CD4-positive, alpha-beta memory T cell (primary cell): ENCODE measurements at regions of chr22 and their contacts with region 1.

Region 1: GRCh38 chr22:39514373-39514973 is 5.9 kb upstream of the ATF4 start:
- DNase-seq: peak in 3 of 5 donors; percentile 33 to 44 (median 36)
- H3K4me3 ChIP-seq: no peak overlapping the region
- H3K4me3 Mint-ChIP-seq: no peak overlapping the region
- H3K27ac ChIP-seq: no peak overlapping the region
- H3K27ac Mint-ChIP-seq: peak overlapping the region in 4 of 7 donors; percentile 4 to 79 (median 17)
- H3K4me1 ChIP-seq: peaks cover 14% of the 10 kb centered on the region
- H3K4me1 Mint-ChIP-seq: peaks cover 11 to 30% (median 17%) of the 10 kb centered on the region in 4 donors
- H3K27me3 ChIP-seq: no peaks in the 10 kb centered on the region
- H3K27me3 Mint-ChIP-seq: no peaks in the 10 kb centered on the region

Region 2: GRCh38 chr22:39277155-39277607 is 237.3 kb before region 1 on chr22:
- CTCF ChIA-PET with region 1: no interaction called
- POLR2A ChIA-PET with region 1: no interaction called
- intact Hi-C with region 1: no loop called
- DNase-seq: no peak
- H3K4me3 ChIP-seq: no peak overlapping the region
- H3K4me3 Mint-ChIP-seq: no peak overlapping the region
- H3K27ac ChIP-seq: no peak overlapping the region
- H3K27ac Mint-ChIP-seq: no peak overlapping the region
- H3K4me1 ChIP-seq: no peaks in the 10 kb centered on the region
- H3K4me1 Mint-ChIP-seq: peaks cover 0 to 2% (median 0%) of the 10 kb centered on the region in 4 donors
- H3K27me3 ChIP-seq: no peaks in the 10 kb centered on the region
- H3K27me3 Mint-ChIP-seq: peaks cover 3 to 8% of the 10 kb centered on the region in 2 donors

Region 3: DNA sequence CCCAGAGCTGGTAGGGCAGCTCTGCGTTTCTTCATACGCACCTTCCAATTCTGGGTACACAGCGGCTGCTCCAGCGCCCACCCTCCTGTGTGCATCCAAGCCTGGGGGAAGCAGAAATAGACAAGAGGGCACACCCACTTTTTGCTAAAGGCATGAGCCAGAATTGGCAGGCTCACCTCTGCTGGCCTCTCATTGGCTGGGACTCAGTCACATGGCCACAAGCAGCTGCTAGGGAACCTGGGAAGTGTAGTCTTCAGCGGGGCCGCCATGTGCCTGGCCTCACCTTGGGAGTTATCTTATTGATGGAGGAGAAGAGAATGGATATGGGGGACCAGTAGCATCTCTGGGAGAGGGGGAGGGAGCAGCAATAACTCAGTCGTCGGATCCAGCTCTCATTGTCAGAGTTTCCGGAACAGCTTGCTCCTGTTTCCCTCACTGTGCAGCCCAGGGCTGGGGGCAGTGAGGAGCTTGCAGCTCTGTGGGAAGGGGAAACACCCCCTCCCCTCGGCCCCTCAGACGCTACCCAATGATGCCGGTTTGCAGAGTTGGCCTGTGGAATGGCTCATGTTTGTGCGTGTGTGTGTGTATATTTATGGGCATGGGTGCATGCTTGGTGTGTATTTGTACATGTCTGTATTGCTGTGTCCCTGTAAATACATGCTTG is 24.2 kb before region 1 on chr22:
- CTCF ChIA-PET with region 1: interaction called, 77 read pairs
- POLR2A ChIA-PET with region 1: interaction called, 83 read pairs
- intact Hi-C with region 1: loop called (anchors 1 kb)
- DNase-seq: peak; percentile 66 to 83 (median 77)
- H3K4me3 ChIP-seq: no peak overlapping the region
- H3K4me3 Mint-ChIP-seq: peak overlapping the region in 2 of 8 donors; percentile 17 to 71
- H3K27ac ChIP-seq: no peak overlapping the region
- H3K27ac Mint-ChIP-seq: peak overlapping the region in 6 of 7 donors; percentile 10 to 81 (median 44)
- H3K4me1 ChIP-seq: peaks cover 6% of the 10 kb centered on the region
- H3K4me1 Mint-ChIP-seq: peaks cover 5 to 13% (median 9%) of the 10 kb centered on the region in 4 donors
- H3K27me3 ChIP-seq: no peaks in the 10 kb centered on the region
- H3K27me3 Mint-ChIP-seq: no peaks in the 10 kb centered on the region

Region 4: GRCh38 chr22:39496131-39496838 is 18.2 kb before region 1 on chr22:
- CTCF ChIA-PET with region 1: interaction called, 77 read pairs
- POLR2A ChIA-PET with region 1: interaction called, 125 read pairs
- intact Hi-C with region 1: loop called (anchors 1 kb)
- DNase-seq: peak; percentile 42 to 65 (median 46)
- H3K4me3 ChIP-seq: no peak overlapping the region
- H3K4me3 Mint-ChIP-seq: no peak overlapping the region
- H3K27ac ChIP-seq: no peak overlapping the region
- H3K27ac Mint-ChIP-seq: peak overlapping the region in 5 of 7 donors; percentile 3 to 75 (median 30)
- H3K4me1 ChIP-seq: no peaks in the 10 kb centered on the region
- H3K4me1 Mint-ChIP-seq: peaks cover 3 to 11% (median 9%) of the 10 kb centered on the region in 4 donors
- H3K27me3 ChIP-seq: no peaks in the 10 kb centered on the region
- H3K27me3 Mint-ChIP-seq: no peaks in the 10 kb centered on the region

Region 5: GRCh38 chr22:39502109-39502788 is 12.2 kb before region 1 on chr22 and contains the start of gene MIEF1:
- CTCF ChIA-PET with region 1: interaction called, 73 read pairs
- POLR2A ChIA-PET with region 1: interaction called, 125 read pairs
- intact Hi-C with region 1: no loop called
- DNase-seq: peak; percentile 79 to 91 (median 82)
- H3K4me3 ChIP-seq: peak within 1 kb of the TSS; percentile 63 to 66
- H3K4me3 Mint-ChIP-seq: peak within 1 kb of the TSS; percentile 95 to 99 (median 96)
- H3K27ac ChIP-seq: peak within 1 kb of the TSS; percentile 70
- H3K27ac Mint-ChIP-seq: peak within 1 kb of the TSS; percentile 78 to 98 (median 96)
- H3K4me1 ChIP-seq: peaks cover 31% of the 10 kb centered on the region
- H3K4me1 Mint-ChIP-seq: peaks cover 13 to 50% (median 35%) of the 10 kb centered on the region in 4 donors
- H3K27me3 ChIP-seq: no peaks in the 10 kb centered on the region
- H3K27me3 Mint-ChIP-seq: no peaks in the 10 kb centered on the region
- total RNA-seq, gene MIEF1: 40.5 to 44.3 TPM